Pancreas (tissue), 10 donors: ENCODE measurements at regions of chr14 and their contacts with region 1.

Region 1: DNA sequence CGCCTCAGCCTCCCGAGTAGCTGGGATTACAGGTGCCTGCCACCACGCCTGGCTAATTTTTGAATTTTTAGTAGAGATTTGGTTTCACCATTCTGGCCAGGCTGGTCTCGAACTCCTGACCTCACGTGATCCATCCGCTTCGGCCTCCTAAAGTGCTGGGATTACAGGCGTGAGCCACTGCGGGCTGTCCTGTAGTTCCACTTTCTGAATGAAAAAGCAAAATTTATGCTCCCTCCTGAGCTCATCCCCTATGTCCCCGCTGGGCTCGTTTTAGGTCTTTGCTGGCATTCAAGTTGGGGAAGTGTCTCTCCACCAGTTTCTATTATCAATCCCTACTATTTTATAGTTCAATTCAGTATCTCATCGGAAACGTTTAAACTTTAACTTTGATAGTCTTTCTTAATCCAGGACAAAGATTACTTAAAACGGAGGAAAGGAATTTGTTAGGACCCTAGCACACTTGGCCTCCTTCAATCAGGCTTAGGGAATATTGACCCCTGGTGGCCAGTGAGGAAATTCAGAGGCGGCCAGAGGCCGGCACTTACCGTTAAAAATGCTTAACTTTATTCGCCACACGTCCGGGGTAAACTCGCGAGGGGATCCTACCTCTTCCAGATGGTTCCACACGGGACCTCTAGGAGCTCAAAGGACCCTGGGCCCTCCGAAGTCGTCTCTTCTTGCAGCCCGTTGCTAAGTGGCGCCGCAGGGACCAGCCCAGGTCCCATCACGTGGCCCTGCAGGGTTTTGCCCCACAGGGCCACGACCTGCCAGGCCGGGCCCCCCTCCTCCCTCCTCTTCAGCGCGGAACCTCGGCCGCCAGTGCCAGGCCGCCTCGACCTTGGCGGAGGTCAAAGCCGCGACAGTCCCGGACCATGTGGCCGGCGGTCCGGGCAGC is 11.4 kb upstream of the DNAL1 start:
- DNase-seq: peak in 5 of 6 donors; percentile 45 to 75 (median 68)
- ATAC-seq: peak; percentile 83 to 93 (median 89)
- H3K4me3 ChIP-seq: peak overlapping the region; percentile 34 to 78 (median 50)
- H3K27ac ChIP-seq: peak overlapping the region in 2 of 4 donors; percentile 44 to 46
- H3K4me1 ChIP-seq: no peaks in the 10 kb centered on the region
- H3K27me3 ChIP-seq: no peaks in the 10 kb centered on the region
- CTCF ChIP-seq: peak; percentile 69 to 82 (median 81)

Region 2: DNA sequence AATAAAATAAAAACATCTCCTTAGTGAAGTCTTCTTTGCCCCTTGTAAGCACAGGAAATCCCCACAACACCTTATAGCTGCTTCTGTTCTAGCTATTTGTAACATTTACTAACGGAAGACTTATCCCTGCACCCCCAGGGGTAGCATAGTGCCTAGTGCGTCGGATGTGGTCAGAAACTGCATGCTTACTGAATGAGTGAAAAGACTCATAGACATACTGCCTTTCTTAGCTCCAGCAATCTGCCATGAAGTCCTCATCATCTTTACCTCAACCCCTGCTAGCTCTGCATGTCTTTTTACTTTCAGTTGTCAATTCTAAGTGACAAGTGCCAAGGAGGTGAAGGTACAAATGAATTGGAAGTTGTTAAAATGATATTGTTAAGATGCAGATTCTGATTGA is 129.7 kb before region 1 on chr14:
- intact Hi-C with region 1: loop called in 2 of 3 experiments (anchors 5 kb)
- DNase-seq: no peak
- ATAC-seq: no peak
- H3K4me3 ChIP-seq: no peak overlapping the region
- H3K27ac ChIP-seq: no peak overlapping the region
- H3K4me1 ChIP-seq: no peaks in the 10 kb centered on the region
- H3K27me3 ChIP-seq: no peaks in the 10 kb centered on the region
- CTCF ChIP-seq: no peak